ENCODE measurements at regions of chr4 and their contacts with region 1.

Region 1: DNA sequence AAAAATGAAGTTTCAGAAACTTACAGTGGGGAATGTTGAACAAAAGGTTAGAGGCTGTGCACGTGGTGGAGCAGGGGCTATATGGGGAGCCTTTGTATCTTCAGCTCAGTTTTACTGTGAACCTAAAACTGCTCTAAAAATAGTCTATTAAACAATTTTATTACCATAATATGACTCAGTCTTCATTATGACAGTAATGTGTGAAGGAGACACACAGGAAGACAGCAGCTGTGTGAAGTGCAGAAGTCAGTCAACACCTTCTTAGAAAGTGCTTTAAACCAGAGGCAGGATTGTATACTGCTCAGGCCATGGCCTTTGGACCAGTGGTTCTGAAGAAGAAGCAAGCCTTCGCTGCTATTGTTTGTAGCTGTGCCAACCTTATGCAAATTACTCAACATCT is 89.7 kb downstream of the ARHGAP10 start:
- DNase-seq: no peak
- H3K4me3 ChIP-seq: no peak overlapping the region
- H3K27ac ChIP-seq: peak overlapping the region; percentile 72 to 96 (median 86)
- H3K4me1 ChIP-seq: peaks cover 0 to 79% (median 75%) of the 10 kb centered on the region in 4 donors
- H3K27me3 ChIP-seq: no peaks in the 10 kb centered on the region
- CTCF ChIP-seq: no peak
- EP300 ChIP-seq: no peak
- POLR2A ChIP-seq: no peak

Region 2: GRCh38 chr4:147578051-147578476 is 243.5 kb before region 1 on chr4:
- intact Hi-C with region 1: no loop called
- DNase-seq: no peak
- H3K4me3 ChIP-seq: no peak overlapping the region
- H3K27ac ChIP-seq: no peak overlapping the region
- H3K4me1 ChIP-seq: no peaks in the 10 kb centered on the region
- H3K27me3 ChIP-seq: no peaks in the 10 kb centered on the region
- CTCF ChIP-seq: no peak
- EP300 ChIP-seq: no peak
- POLR2A ChIP-seq: no peak

Region 3: GRCh38 chr4:147786031-147786430 is 35.5 kb before region 1 on chr4:
- intact Hi-C with region 1: loop called (anchors 2 kb)
- DNase-seq: no peak
- H3K4me3 ChIP-seq: no peak overlapping the region
- H3K27ac ChIP-seq: peak overlapping the region; percentile 31 to 67 (median 44)
- H3K4me1 ChIP-seq: peaks cover 0 to 68% (median 66%) of the 10 kb centered on the region in 4 donors
- H3K27me3 ChIP-seq: no peaks in the 10 kb centered on the region
- CTCF ChIP-seq: no peak
- EP300 ChIP-seq: no peak
- POLR2A ChIP-seq: no peak

Measured in sigmoid colon (tissue), 7 donors.